ENCODE measurements at regions of chr5 and their contacts with region 1.

Region 1: GRCh38 chr5:109688971-109689739 is 572 bp upstream of the MAN2A1 start:
- DNase-seq: peak; percentile 84
- ATAC-seq: peak; percentile 89
- H3K4me3 ChIP-seq: peak overlapping the region; percentile 81
- H3K27ac ChIP-seq: peak overlapping the region; percentile 90
- H3K4me1 ChIP-seq: peaks cover 12% of the 10 kb centered on the region
- H3K27me3 ChIP-seq: no peaks in the 10 kb centered on the region
- CTCF ChIP-seq: peak; percentile 15; the same call in 1 of the 2 replicates
- POLR2A ChIP-seq: peak; percentile 71; the same call in 1 of the 2 replicates
- RAD21 ChIP-seq: 0 out of 2 replicates have a peak, but pooled peaks have one; percentile 26

Region 2: DNA sequence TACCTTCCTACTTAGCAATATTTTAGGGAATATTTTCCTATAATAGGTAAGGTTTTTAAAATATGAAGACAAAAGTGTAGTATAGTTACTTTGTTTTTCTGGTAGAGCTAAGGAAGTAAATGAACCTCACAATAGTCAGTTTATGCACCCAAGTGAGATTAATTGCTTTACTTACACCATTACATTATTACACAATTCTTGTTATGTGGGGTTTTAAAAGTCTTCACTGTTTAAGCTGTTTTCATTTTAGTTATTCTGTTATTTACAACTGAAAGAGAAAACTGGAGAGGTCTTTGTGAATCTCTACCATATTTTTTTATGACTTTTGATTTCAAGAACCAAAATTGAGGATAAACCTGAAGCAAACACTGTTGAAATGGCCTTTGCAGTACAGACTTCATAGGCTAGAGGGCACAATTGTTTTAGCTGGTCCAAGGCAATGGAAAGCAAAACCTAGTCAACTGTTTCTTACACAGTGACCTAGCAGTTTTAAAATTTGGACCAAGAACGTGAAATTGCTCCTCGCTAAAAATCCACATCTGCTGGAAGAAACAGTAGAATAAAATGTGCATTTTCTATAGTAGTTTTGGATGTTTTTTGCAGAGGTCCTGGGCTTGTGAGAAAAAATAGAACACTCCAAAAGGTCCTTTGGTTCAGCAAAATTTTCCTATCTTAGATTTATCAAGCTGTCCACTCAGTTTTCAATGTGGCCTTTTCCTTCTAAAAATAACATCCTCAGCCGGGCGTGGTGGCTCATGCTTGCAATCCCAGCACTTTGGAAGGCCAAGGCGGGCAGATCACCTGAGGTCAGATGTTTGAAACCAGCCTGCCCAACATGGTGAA is 1007.9 kb before region 1 on chr5:
- CTCF ChIA-PET with region 1: no interaction called
- POLR2A ChIA-PET with region 1: no interaction called
- dilution Hi-C with region 1: no loop called
- in situ Hi-C with region 1: no loop called
- intact Hi-C with region 1: loop called (anchors 5 kb)
- DNase-seq: peak; percentile 78
- ATAC-seq: peak; percentile 95
- H3K4me3 ChIP-seq: no peak overlapping the region
- H3K27ac ChIP-seq: no peak overlapping the region
- H3K4me1 ChIP-seq: no peaks in the 10 kb centered on the region
- H3K27me3 ChIP-seq: peaks cover 7% of the 10 kb centered on the region
- CTCF ChIP-seq: peak; percentile 89
- POLR2A ChIP-seq: no peak
- RAD21 ChIP-seq: peak; percentile 88

Region 3: GRCh38 chr5:109409844-109410388 is 279.2 kb before region 1 on chr5 and contains the start of gene PJA2:
- CTCF ChIA-PET with region 1: no interaction called
- POLR2A ChIA-PET with region 1: no interaction called
- dilution Hi-C with region 1: no loop called
- in situ Hi-C with region 1: no loop called
- intact Hi-C with region 1: loop called (anchors 1 kb)
- DNase-seq: peak; percentile 100
- ATAC-seq: peak; percentile 92
- H3K4me3 ChIP-seq: peak within 1 kb of the TSS; percentile 97
- H3K27ac ChIP-seq: peak within 1 kb of the TSS; percentile 90
- H3K4me1 ChIP-seq: peaks cover 3% of the 10 kb centered on the region; the same call in 1 of the 2 replicates
- H3K27me3 ChIP-seq: no peaks in the 10 kb centered on the region
- CTCF ChIP-seq: peak; percentile 17; the same call in 1 of the 2 replicates
- POLR2A ChIP-seq: no peak; the same call in none of the 2 replicates
- RAD21 ChIP-seq: no peak; the same call in 1 of the 2 replicates
- total RNA-seq, gene PJA2: 70.6 and 112 TPM in 2 replicates

Region 4: DNA sequence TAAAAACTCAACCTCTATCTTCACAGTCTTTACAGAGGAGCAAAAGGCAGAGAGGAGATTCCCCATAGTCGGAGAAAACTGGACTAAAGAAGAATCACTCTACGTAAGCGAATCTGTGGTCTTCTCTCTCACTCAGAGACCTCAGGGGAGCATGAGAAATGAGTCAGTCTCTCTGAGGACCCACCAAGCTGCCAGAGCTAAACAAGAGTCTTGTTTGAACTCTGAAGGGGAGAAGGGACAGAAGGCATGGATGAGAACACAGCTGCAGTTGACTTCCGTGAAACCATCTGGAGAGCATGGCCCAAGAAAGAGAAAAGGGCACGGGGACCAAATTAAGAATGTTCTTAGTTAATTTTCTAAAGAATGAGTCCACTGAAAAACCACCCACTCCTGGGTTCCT is 12.2 kb before region 1 on chr5:
- CTCF ChIA-PET with region 1: no interaction called
- POLR2A ChIA-PET with region 1: no interaction called
- dilution Hi-C with region 1: no loop called
- in situ Hi-C with region 1: no loop called
- intact Hi-C with region 1: no loop called
- DNase-seq: no peak
- ATAC-seq: no peak
- H3K4me3 ChIP-seq: no peak overlapping the region
- H3K27ac ChIP-seq: no peak overlapping the region
- H3K4me1 ChIP-seq: no peaks in the 10 kb centered on the region
- H3K27me3 ChIP-seq: peaks cover 12% of the 10 kb centered on the region
- CTCF ChIP-seq: no peak
- POLR2A ChIP-seq: no peak
- RAD21 ChIP-seq: no peak

Region 5: GRCh38 chr5:109826426-109826825 is 137.3 kb after region 1 on chr5:
- CTCF ChIA-PET with region 1: no interaction called
- POLR2A ChIA-PET with region 1: no interaction called
- dilution Hi-C with region 1: no loop called
- in situ Hi-C with region 1: no loop called
- intact Hi-C with region 1: loop called (anchors 5 kb)
- DNase-seq: peak; percentile 55
- ATAC-seq: no peak
- H3K4me3 ChIP-seq: no peak overlapping the region
- H3K27ac ChIP-seq: no peak overlapping the region
- H3K4me1 ChIP-seq: peaks cover 5% of the 10 kb centered on the region
- H3K27me3 ChIP-seq: no peaks in the 10 kb centered on the region
- CTCF ChIP-seq: no peak
- POLR2A ChIP-seq: no peak
- RAD21 ChIP-seq: no peak

Region 6: DNA sequence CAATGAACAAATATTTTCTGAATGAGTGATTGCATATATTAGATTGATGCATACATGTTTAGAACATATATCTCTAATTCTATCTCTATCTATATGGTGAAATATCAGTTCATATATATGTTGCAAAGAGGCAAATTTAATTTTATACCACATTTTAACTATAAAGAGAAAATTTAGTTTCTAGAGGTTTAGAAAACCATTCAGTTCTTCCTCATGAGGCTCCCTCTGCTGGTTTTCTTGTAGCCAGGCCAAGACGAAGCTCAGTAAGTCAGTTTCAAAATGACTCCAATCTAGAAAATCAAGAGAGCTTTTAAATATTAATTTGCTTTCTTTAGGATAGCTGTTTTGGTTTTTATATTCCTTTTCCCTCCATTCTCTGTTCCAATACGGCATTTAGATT is 725.2 kb after region 1 on chr5:
- CTCF ChIA-PET with region 1: no interaction called
- POLR2A ChIA-PET with region 1: no interaction called
- dilution Hi-C with region 1: no loop called
- in situ Hi-C with region 1: no loop called
- intact Hi-C with region 1: loop called (anchors 1 kb)
- DNase-seq: peak; percentile 10
- ATAC-seq: 0 out of 2 replicates have a peak, but pooled peaks have one; percentile 24
- H3K4me3 ChIP-seq: no peak overlapping the region
- H3K27ac ChIP-seq: no peak overlapping the region
- H3K4me1 ChIP-seq: no peaks in the 10 kb centered on the region
- H3K27me3 ChIP-seq: no peaks in the 10 kb centered on the region
- CTCF ChIP-seq: no peak; the same call in 1 of the 2 replicates
- POLR2A ChIP-seq: no peak
- RAD21 ChIP-seq: no peak

Region 7: GRCh38 chr5:110738812-110739651 is 1049.9 kb after region 1 on chr5 and contains the start of gene SLC25A46:
- CTCF ChIA-PET with region 1: no interaction called
- POLR2A ChIA-PET with region 1: no interaction called
- dilution Hi-C with region 1: no loop called
- in situ Hi-C with region 1: no loop called
- intact Hi-C with region 1: loop called (anchors 10 kb)
- DNase-seq: peak; percentile 84
- ATAC-seq: peak; percentile 84
- H3K4me3 ChIP-seq: peak within 1 kb of the TSS; percentile 68
- H3K27ac ChIP-seq: peak within 1 kb of the TSS; percentile 78
- H3K4me1 ChIP-seq: no peaks in the 10 kb centered on the region
- H3K27me3 ChIP-seq: no peaks in the 10 kb centered on the region
- CTCF ChIP-seq: no peak
- POLR2A ChIP-seq: peak; percentile 64; the same call in 1 of the 2 replicates
- RAD21 ChIP-seq: no peak
- total RNA-seq, gene SLC25A46: 67.9 and 84.4 TPM in 2 replicates